GM18951 (cell line): ENCODE measurements at regions of chr16 and their contacts with region 1.

Region 1: DNA sequence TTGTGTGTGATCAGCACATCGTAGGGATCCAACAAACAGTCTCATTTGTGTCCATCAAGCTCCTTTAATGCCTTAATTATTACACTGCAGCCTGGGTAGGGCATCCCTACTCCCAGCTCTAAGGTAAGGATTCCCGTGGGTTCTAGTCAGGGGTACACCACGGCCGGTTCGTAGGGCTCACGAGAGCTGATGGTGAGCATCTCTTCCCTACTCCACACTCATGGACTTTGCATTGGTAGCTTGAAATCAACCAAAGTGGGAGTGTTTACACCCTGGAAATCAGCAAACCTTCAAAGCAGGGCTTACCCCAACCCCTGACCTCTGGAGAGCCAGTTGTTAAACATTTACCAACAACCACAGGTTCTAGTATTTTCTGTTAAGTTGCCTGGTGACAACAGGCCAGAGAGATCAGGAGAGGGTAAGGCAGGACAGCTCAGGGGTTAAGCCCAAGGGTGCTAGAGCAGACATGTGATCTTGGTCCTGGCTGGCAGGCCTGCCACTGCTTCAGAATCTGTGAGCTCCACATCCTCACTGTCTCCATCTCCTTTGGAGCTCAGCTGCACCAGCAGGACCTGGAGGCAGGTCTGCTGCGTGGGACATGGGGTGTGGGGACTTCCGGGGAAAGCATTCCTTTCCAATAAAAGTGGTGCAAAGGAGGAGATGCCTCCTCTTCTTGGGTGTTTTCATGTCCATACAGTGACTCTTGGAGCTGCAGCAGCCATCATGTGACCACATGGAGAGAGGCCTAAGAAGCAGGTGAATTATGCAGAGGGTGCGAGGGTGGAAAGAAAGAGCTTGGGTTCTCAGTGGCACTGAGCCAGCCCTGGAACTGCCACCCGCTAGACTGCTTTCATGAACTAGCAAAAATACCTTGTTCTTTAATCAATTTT is 36.1 kb upstream of the ZCCHC14 start:
- POLR2A ChIP-seq: no peak

Region 2: GRCh38 chr16:86874141-86874540 is 654.8 kb before region 1 on chr16:
- in situ Hi-C with region 1: loop called (anchors 10 kb)
- POLR2A ChIP-seq: no peak

Region 3: GRCh38 chr16:87132491-87132961 is 396.4 kb before region 1 on chr16:
- in situ Hi-C with region 1: no loop called
- POLR2A ChIP-seq: no peak